GM12878 (cell line): ENCODE measurements at regions of chr11 and their contacts with region 1.

Region 1: DNA sequence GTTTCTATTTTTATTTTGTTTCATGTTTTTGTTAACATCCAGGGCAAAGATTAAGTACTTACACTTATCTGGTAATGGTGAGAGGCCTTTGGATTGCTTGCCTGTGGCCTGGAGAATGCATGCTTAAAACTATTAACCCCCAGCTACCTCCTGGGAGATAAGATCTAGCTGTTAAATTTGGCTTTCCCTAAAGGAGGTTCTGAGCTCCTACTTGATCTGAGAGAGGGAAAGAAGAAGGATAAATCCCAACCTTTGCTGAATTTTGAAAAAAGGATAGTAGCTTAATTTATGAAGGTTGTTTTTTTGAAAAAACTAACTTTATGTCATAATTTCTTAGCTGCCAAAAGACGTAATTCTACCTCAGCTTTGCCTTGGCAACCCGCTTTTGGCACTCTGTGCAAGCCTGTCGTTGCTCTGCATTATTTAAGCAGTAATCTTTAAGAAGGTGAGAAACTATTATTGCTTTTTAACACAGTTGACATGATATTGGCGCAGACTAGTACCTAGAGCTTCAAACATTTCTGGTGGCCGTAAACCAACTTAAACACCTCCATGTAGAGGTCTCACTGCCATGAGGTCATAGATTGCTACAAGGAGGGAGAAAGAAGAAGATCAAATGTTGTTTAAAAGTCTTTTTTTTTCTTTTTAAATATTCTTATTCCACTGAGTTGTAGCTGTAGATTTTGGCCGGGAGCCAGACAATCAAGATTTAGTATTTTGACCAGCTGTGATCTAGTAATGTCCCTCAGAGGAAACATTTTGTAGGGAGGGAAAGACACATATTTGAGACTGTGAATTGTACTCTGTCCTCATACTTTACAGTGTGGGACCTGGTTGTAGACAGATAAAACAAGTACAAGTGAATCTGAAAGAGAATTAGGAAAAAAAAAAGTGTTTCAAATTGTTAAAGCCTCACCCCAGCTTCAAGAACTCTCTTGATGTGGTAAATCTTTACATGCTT is 74.4 kb downstream of the WNT11 start:
- DNase-seq: no peak
- ATAC-seq: no peak
- H3K4me3 ChIP-seq: no peak overlapping the region
- H3K27ac ChIP-seq: no peak overlapping the region
- H3K4me1 ChIP-seq: no peaks in the 10 kb centered on the region
- H3K27me3 ChIP-seq: no peaks in the 10 kb centered on the region
- CTCF ChIP-seq: no peak
- EP300 ChIP-seq: no peak
- POLR2A ChIP-seq: no peak
- RAD21 ChIP-seq: no peak

Region 2: DNA sequence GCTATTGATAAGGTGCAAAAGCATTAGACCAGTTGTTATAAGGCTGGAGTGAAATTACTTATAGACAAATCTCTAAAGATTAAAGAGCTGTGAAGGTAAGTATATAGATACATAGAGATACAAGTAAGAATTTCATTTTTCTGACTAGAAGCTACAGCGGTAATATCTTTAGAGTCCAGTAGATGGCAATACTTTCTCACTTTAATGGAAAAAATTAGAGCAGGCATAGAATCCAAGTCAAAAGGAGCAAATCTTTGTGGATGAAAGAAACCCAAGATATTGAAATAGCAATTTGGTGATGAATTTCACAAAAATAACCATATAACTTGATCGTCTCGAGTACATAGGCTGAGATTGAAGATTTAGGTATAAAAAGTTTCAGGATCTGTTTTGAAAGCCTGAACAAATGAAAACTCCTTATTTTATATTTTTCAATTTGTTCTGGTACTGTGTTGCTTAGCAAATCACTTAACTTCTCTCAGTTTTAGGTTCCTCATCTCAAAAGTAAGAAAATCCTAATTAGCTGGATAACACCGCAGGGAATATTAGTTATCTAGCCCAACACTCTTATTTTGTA is 235.0 kb before region 1 on chr11:
- CTCF ChIA-PET with region 1: interaction called, 9 read pairs
- POLR2A ChIA-PET with region 1: interaction called, 6 read pairs
- RAD21 ChIA-PET with region 1: no interaction called
- SMC1A ChIA-PET with region 1: interaction called, 13 read pairs
- in situ Hi-C with region 1: no loop called
- intact Hi-C with region 1: no loop called
- DNase-seq: no peak
- ATAC-seq: peak; percentile 46
- H3K4me3 ChIP-seq: no peak overlapping the region
- H3K27ac ChIP-seq: no peak overlapping the region
- H3K4me1 ChIP-seq: peaks cover 8% of the 10 kb centered on the region
- H3K27me3 ChIP-seq: no peaks in the 10 kb centered on the region
- CTCF ChIP-seq: peak; percentile 55 to 62 (median 57)
- EP300 ChIP-seq: no peak
- POLR2A ChIP-seq: no peak
- RAD21 ChIP-seq: peak; percentile 77

Region 3: DNA sequence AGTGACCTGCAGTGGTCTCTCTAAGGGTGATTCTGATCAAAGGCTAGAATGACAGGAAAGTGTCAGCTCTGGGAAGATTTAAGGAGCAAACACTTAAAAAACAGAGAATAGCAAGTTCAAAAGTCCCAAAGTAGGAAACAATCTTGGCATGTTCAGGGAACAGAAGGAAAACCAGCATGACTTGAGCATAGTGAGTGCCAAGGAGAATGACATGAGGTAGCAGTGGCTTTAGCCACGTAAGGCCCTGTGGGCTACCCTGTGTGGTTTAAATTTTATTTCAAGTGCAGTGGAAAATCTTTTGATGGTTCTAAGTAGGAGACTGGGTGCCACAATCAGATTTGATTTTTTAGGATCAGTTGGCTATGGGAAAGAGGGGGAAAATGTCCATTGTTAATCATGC is 75.1 kb before region 1 on chr11:
- CTCF ChIA-PET with region 1: no interaction called
- POLR2A ChIA-PET with region 1: no interaction called
- RAD21 ChIA-PET with region 1: no interaction called
- SMC1A ChIA-PET with region 1: no interaction called
- in situ Hi-C with region 1: no loop called
- intact Hi-C with region 1: no loop called
- DNase-seq: no peak
- ATAC-seq: no peak
- H3K4me3 ChIP-seq: no peak overlapping the region
- H3K27ac ChIP-seq: no peak overlapping the region
- H3K4me1 ChIP-seq: no peaks in the 10 kb centered on the region; the same call in none of the 2 replicates
- H3K27me3 ChIP-seq: no peaks in the 10 kb centered on the region
- CTCF ChIP-seq: no peak
- EP300 ChIP-seq: no peak
- POLR2A ChIP-seq: no peak
- RAD21 ChIP-seq: no peak

Region 4: GRCh38 chr11:76120513-76121101 is 11.3 kb before region 1 on chr11:
- CTCF ChIA-PET with region 1: interaction called, 4 read pairs
- POLR2A ChIA-PET with region 1: interaction called, 3 read pairs
- RAD21 ChIA-PET with region 1: interaction called, 3 read pairs
- SMC1A ChIA-PET with region 1: interaction called, 10 read pairs
- in situ Hi-C with region 1: no loop called
- intact Hi-C with region 1: no loop called
- DNase-seq: no peak
- ATAC-seq: no peak
- H3K4me3 ChIP-seq: no peak overlapping the region
- H3K27ac ChIP-seq: no peak overlapping the region
- H3K4me1 ChIP-seq: peaks cover 9% of the 10 kb centered on the region
- H3K27me3 ChIP-seq: no peaks in the 10 kb centered on the region
- CTCF ChIP-seq: no peak
- EP300 ChIP-seq: no peak
- POLR2A ChIP-seq: no peak
- RAD21 ChIP-seq: no peak

Region 5: GRCh38 chr11:76266270-76267090 is 134.5 kb after region 1 on chr11:
- CTCF ChIA-PET with region 1: no interaction called
- POLR2A ChIA-PET with region 1: no interaction called
- RAD21 ChIA-PET with region 1: no interaction called
- SMC1A ChIA-PET with region 1: no interaction called
- in situ Hi-C with region 1: no loop called
- intact Hi-C with region 1: no loop called
- DNase-seq: no peak
- ATAC-seq: no peak
- H3K4me3 ChIP-seq: no peak overlapping the region
- H3K27ac ChIP-seq: no peak overlapping the region
- H3K4me1 ChIP-seq: no peaks in the 10 kb centered on the region
- H3K27me3 ChIP-seq: peaks cover 1 to 2% of the 10 kb centered on the region in 2 experiments; a peak in 2 of 4 replicates
- CTCF ChIP-seq: no peak
- EP300 ChIP-seq: no peak
- POLR2A ChIP-seq: no peak
- RAD21 ChIP-seq: no peak